Endothelial cell of umbilical vein (primary cell): ENCODE measurements at regions of chr2 and their contacts with region 1.

Region 1: DNA sequence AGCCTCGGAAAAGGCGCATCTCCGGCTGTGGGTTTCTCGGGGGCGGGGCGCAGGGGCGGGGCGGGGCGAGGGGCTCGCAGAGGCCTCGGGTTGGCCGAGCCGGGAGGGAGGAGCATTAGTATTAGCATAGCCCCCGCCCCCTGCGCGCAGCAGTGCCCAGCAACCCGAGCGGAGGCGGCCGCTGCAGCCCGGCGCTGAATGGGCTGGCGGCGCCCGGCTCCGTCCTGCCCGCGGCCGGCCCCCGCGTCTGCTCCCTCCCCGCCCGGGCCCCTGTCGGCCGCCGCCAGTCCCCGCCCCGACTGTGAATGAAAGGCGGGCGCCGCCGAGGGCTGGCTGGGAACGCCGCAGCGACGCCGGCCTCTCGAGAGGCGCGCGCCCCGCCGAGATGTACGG is at the start of gene EFR3B:
- DNase-seq: peak; percentile 94
- H3K4me3 ChIP-seq: peak within 1 kb of the TSS; percentile 44 to 75 (median 67)
- H3K27ac ChIP-seq: no peak within 1 kb of the TSS
- H3K4me1 ChIP-seq: peaks cover 21% of the 10 kb centered on the region
- H3K27me3 ChIP-seq: peaks cover 2 to 11% of the 10 kb centered on the region in 2 experiments
- CTCF ChIP-seq: no peak
- POLR2A ChIP-seq: no peak
- total RNA-seq, gene EFR3B: 0.58 and 0.77 TPM in 2 replicates

Region 2: DNA sequence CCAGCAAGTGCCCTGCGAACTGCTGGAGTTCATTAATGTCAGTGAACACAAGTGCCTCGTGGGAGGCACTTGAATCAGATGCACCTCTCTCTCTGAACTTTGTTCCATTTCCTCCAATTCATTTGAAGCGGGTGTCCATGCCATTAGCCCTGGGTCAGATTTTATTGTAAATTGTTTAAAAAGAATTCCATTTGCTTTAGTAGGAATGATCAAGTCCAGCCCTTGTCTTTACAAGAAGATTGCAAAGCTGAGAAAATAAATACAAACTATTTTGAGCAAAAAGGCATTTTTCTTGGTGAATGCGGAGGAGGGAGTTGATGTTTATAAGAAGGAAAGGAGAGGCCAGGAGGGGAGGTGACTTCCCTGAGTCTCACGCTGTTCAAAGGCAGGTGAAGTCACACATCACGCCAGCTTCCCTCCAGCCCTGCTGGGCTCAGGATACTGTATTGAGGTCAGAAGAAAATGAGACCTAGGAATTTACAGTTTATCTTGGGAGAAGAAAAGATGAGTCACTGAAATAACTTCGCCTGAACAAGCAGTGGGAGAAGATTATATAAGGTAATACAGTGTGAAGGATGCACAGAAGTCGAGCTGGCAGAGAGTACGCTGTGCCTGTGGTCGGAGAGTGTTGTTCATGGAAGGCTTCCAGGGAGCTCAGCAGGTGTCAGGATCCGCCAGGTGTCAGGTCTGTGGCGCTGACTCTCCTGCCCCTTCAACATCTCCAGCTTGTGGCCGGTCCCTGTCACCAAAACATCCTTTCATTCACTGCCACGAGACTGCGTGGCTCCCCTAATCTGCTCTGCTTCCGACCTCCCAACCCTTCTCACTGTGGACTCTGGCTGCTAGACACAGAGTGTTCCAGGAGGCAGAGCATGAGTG is 36.5 kb after region 1 on chr2:
- CTCF ChIA-PET with region 1: no interaction called
- POLR2A ChIA-PET with region 1: no interaction called
- dilution Hi-C with region 1: no loop called
- intact Hi-C with region 1: loop called (anchors 2 kb)
- DNase-seq: peak; percentile 88
- H3K4me3 ChIP-seq: no peak overlapping the region
- H3K27ac ChIP-seq: no peak overlapping the region
- H3K4me1 ChIP-seq: peaks cover 12% of the 10 kb centered on the region
- H3K27me3 ChIP-seq: peaks cover 2 to 9% of the 10 kb centered on the region in 2 experiments
- CTCF ChIP-seq: no peak
- POLR2A ChIP-seq: peak; percentile 19

Region 3: DNA sequence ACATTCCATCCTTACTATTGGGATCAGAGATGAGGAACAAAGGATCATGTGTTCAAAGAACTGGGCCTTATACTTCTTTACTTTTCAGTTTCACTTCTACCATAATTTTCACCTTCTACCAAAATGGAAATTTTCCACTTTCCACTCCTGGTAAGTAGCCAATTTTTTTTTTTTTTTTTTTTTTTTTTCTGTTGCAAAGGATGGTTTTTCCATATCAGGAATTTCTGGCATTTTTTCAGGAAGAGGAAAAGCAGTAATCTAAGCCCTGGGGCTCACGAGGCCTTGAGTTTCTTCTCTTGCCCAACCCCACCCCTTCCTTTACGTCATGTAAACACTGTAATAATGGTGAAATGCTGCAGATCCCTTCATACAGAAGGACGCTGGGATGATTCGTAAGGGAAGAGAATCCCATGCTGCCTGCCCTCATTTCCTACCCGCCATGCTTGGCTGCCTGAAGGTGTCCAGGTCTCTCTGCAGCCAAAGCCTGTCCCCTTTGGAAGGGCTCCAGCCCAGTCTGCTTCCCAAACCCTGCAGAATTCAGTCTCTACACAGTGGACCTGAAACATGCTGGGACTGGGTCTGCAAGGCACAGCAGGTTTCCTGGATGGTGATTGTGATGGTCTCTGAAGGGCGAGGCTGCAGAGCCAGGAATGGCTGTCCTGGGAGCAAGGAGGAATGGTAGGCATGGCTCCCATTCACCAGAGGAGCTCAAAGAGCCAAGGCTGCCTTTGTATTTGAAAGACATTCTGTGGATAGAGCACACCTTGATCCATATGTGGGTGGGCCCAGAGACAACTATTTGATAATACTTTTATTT is 57.0 kb after region 1 on chr2:
- CTCF ChIA-PET with region 1: no interaction called
- POLR2A ChIA-PET with region 1: no interaction called
- dilution Hi-C with region 1: no loop called
- intact Hi-C with region 1: loop called (anchors 5 kb)
- DNase-seq: peak; percentile 86
- H3K4me3 ChIP-seq: no peak overlapping the region
- H3K27ac ChIP-seq: no peak overlapping the region
- H3K4me1 ChIP-seq: peaks cover 8% of the 10 kb centered on the region
- H3K27me3 ChIP-seq: no peaks in the 10 kb centered on the region
- CTCF ChIP-seq: no peak
- POLR2A ChIP-seq: no peak